CD4-positive, alpha-beta memory T cell (primary cell): ENCODE measurements at regions of chr5 and their contacts with region 1.

Region 1: GRCh38 chr5:111384220-111384619 is 128.1 kb downstream of the STARD4 start:
- DNase-seq: no peak
- H3K4me3 ChIP-seq: no peak overlapping the region
- H3K4me3 Mint-ChIP-seq: no peak overlapping the region
- H3K27ac ChIP-seq: no peak overlapping the region
- H3K27ac Mint-ChIP-seq: no peak overlapping the region
- H3K4me1 ChIP-seq: no peaks in the 10 kb centered on the region
- H3K4me1 Mint-ChIP-seq: peaks cover 5 to 27% (median 18%) of the 10 kb centered on the region in 4 donors
- H3K27me3 ChIP-seq: no peaks in the 10 kb centered on the region
- H3K27me3 Mint-ChIP-seq: no peaks in the 10 kb centered on the region

Region 2: GRCh38 chr5:111266491-111266890 is 117.7 kb before region 1 on chr5:
- CTCF ChIA-PET with region 1: no interaction called
- POLR2A ChIA-PET with region 1: no interaction called
- intact Hi-C with region 1: no loop called
- DNase-seq: no peak
- H3K4me3 ChIP-seq: no peak overlapping the region
- H3K4me3 Mint-ChIP-seq: peak overlapping the region in 1 of 8 donors; percentile 2
- H3K27ac ChIP-seq: no peak overlapping the region
- H3K27ac Mint-ChIP-seq: peak overlapping the region in 2 of 7 donors; percentile 28 to 62
- H3K4me1 ChIP-seq: peaks cover 51% of the 10 kb centered on the region
- H3K4me1 Mint-ChIP-seq: peaks cover 36 to 71% (median 51%) of the 10 kb centered on the region in 4 donors
- H3K27me3 ChIP-seq: no peaks in the 10 kb centered on the region
- H3K27me3 Mint-ChIP-seq: no peaks in the 10 kb centered on the region

Region 3: GRCh38 chr5:111313017-111313724 is 71.0 kb before region 1 on chr5:
- CTCF ChIA-PET with region 1: no interaction called
- POLR2A ChIA-PET with region 1: interaction called, 3 read pairs
- intact Hi-C with region 1: loop called (anchors 2 kb)
- DNase-seq: no peak
- H3K4me3 ChIP-seq: no peak overlapping the region
- H3K4me3 Mint-ChIP-seq: peak overlapping the region in 2 of 8 donors; percentile 27 to 28
- H3K27ac ChIP-seq: no peak overlapping the region
- H3K27ac Mint-ChIP-seq: peak overlapping the region; percentile 24 to 66 (median 59)
- H3K4me1 ChIP-seq: peaks cover 65% of the 10 kb centered on the region
- H3K4me1 Mint-ChIP-seq: peaks cover 54 to 85% (median 71%) of the 10 kb centered on the region in 4 donors
- H3K27me3 ChIP-seq: no peaks in the 10 kb centered on the region
- H3K27me3 Mint-ChIP-seq: no peaks in the 10 kb centered on the region

Region 4: GRCh38 chr5:111411301-111411700 is 27.1 kb after region 1 on chr5:
- CTCF ChIA-PET with region 1: no interaction called
- POLR2A ChIA-PET with region 1: no interaction called
- intact Hi-C with region 1: no loop called
- DNase-seq: no peak
- H3K4me3 ChIP-seq: no peak overlapping the region
- H3K4me3 Mint-ChIP-seq: no peak overlapping the region
- H3K27ac ChIP-seq: no peak overlapping the region
- H3K27ac Mint-ChIP-seq: peak overlapping the region in 1 of 7 donors; percentile 16
- H3K4me1 ChIP-seq: no peaks in the 10 kb centered on the region
- H3K4me1 Mint-ChIP-seq: peaks cover 0 to 12% (median 8%) of the 10 kb centered on the region in 4 donors
- H3K27me3 ChIP-seq: no peaks in the 10 kb centered on the region
- H3K27me3 Mint-ChIP-seq: no peaks in the 10 kb centered on the region